ENCODE measurements at regions of chr2 and their contacts with region 1.

Region 1: GRCh38 chr2:227766373-227766883 is 20.7 kb downstream of the SCYGR8 start:
- DNase-seq: peak; percentile 65 to 88 (median 74)
- ATAC-seq: peak; percentile 97
- H3K4me3 ChIP-seq: no peak overlapping the region
- H3K27ac ChIP-seq: no peak overlapping the region
- H3K4me1 ChIP-seq: peaks cover 6 to 7% of the 10 kb centered on the region in 2 donors
- H3K27me3 ChIP-seq: no peaks in the 10 kb centered on the region
- CTCF ChIP-seq: peak; percentile 84 to 90

Region 2: DNA sequence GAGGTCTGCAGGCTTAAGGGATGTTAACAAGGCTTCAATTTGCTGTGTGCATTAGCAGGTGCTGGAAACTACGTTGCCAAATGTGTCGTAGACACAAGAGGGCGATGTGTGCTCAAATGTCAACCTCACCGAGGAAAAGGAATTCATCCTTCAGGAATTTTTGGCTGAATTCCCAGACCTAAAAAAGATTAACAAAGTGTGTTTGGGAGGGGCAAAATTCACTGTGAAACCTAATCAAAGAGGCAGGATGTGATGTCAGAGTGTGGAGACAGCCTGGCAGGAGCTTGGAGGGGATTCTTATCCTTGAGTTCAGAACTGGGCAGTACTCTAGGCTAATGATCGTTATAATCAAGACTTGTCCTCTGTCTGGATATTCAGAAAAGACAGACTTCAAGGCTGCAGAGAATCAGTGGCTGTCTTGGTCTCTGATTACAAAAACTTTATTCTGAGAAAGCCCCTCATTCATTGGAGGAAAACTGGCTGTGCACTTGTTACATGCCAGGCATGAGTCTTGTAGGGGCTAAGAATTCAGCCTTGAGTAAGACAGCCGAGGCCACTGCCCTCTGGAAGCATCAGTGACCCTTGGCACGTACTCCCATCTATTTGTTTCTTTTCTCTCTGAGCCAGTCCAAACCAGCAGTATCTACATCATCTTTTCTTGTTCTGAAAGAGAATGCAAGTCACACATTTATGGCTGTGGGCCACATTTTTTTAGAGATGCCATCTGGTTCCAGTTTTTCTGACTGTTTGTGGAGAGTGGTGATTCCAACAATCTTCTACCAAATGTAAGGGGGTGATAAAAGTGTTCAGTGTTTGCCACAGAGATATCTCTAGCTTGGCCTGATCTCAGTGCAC is 360.0 kb before region 1 on chr2:
- intact Hi-C with region 1: loop called in 1 of 2 experiments (anchors 10 kb)
- DNase-seq: peak in 3 of 4 donors; percentile 57 to 89 (median 74)
- ATAC-seq: peak; percentile 87
- H3K4me3 ChIP-seq: no peak overlapping the region
- H3K27ac ChIP-seq: peak overlapping the region; percentile 74 to 77
- H3K4me1 ChIP-seq: peaks cover 4 to 61% of the 10 kb centered on the region in 2 donors
- H3K27me3 ChIP-seq: no peaks in the 10 kb centered on the region
- CTCF ChIP-seq: peak; percentile 44 to 58

Region 3: DNA sequence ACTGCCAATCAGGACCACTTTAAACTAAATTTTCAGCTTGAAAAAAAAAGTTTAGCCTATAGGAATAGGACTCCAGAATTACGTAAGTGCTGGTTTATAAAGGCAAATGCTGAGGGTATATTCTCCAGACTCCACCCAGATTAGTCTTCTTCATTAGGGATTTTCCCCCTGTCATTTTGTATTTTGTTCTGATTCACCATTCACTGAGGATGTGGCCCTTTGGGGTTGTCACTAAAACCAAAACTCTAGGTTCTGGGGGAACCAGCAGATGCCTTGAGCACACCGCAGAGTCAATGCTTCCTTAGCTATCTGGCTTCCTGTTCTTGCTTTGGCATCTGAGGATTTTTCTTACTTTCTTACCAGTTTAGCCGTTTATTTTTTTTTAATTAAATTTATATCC is 138.7 kb before region 1 on chr2:
- intact Hi-C with region 1: no loop called
- DNase-seq: no peak
- ATAC-seq: no peak
- H3K4me3 ChIP-seq: no peak overlapping the region
- H3K27ac ChIP-seq: no peak overlapping the region
- H3K4me1 ChIP-seq: no peaks in the 10 kb centered on the region
- H3K27me3 ChIP-seq: peaks cover 0 to 18% of the 10 kb centered on the region in 2 donors
- CTCF ChIP-seq: no peak

Region 4: GRCh38 chr2:227655454-227655853 is 111.0 kb before region 1 on chr2:
- intact Hi-C with region 1: loop called in 1 of 2 experiments (anchors 5 kb)
- DNase-seq: no peak
- ATAC-seq: peak; percentile 46
- H3K4me3 ChIP-seq: no peak overlapping the region
- H3K27ac ChIP-seq: peak overlapping the region in 1 of 2 donors; percentile 37
- H3K4me1 ChIP-seq: peaks cover 0 to 6% of the 10 kb centered on the region in 2 donors
- H3K27me3 ChIP-seq: no peaks in the 10 kb centered on the region
- CTCF ChIP-seq: no peak